Activated naive CD4-positive, alpha-beta T cell treated with anti-CD3 and anti-CD28 coated beads, Interleukin-2, amount 10 ng/mL, durations not matched to agents 7 days and 5 days (primary cell): ENCODE measurements at regions of chr6 and their contacts with region 1.

Region 1: GRCh38 chr6:5302995-5303622 is 41.8 kb downstream of the FARS2 start:
- DNase-seq: peak; percentile 72
- H3K4me3 Mint-ChIP-seq: no peak overlapping the region
- H3K27ac Mint-ChIP-seq: no peak overlapping the region
- H3K4me1 Mint-ChIP-seq: peaks cover 19% of the 10 kb centered on the region
- H3K27me3 Mint-ChIP-seq: no peaks in the 10 kb centered on the region

Region 2: DNA sequence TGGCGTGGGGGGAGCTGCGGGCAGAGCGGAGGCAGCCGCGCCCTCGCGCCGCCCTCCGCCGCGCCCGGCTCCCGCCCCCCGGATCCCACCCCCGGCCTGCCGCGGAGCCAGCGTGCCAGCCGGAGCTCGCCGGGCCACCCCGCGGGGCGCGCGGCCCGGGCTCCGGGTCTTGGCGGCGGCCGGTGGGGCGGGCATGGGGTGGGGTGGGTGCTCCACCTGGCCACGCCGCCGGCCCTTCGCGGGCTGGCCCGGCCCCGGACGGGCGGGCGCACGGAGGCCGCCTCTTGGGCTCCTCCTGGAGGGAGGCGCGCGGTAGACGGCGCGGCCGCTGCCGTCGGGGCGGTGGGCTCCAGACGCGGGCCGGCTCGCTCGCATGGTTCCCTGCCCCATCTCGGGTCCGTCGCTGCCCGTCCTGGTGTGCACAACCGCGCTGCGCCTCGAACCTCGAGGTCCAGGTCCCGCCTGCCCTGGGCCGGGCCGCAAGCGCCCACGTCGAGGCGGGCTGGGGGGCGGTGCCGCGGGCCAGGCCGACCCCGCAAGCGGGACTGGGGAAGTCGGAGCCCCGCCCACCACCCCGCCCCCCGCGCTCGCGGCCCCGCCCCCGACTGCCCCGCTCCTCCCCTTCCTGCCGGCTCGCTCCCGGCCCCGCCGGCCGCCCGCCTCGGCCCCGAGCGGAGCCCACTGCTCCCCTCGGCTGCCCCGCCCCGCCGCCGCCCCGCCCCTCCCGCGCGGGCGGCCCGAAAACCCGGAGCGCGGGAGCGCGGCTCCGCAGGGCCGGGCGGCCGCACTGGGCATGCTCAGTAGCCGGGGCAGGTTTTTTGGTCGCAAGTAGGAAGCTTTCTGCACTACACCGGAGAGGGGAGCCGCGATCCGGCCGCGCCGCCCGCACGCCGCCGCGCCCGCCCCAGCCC is 527.3 kb before region 1 on chr6 and contains the start of gene CDYL:
- CTCF ChIA-PET with region 1: no interaction called
- DNase-seq: peak; percentile 86
- H3K4me3 Mint-ChIP-seq: peak within 1 kb of the TSS; percentile 78
- H3K27ac Mint-ChIP-seq: peak within 1 kb of the TSS; percentile 79
- H3K4me1 Mint-ChIP-seq: peaks cover 40% of the 10 kb centered on the region
- H3K27me3 Mint-ChIP-seq: peaks cover 38% of the 10 kb centered on the region

Region 3: DNA sequence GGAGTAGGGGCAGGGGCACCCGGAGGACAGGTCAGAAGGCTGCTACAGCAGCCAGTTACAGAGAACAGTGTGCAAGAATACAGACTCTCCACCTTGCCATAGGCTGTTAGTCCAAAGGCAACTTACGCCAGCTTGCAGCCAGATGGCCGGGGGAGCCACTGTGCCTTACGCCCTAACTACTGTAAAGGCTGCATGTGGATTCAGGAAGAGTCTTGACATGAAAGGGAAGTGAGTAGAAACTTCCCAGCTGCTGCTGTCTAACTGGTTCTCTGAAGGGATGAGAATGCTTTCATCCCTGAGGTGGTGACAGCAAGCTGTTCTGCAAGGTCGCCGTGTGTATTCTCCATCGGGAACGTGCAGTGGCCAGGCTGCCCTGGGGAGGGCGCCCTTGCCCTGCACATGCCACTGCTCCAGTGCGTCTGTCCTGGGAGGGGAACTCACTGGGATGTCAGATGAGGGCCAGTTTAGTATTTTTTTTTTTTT is 88.5 kb before region 1 on chr6:
- CTCF ChIA-PET with region 1: interaction called, 23 read pairs
- DNase-seq: no peak
- H3K4me3 Mint-ChIP-seq: no peak overlapping the region
- H3K27ac Mint-ChIP-seq: no peak overlapping the region
- H3K4me1 Mint-ChIP-seq: peaks cover 11% of the 10 kb centered on the region
- H3K27me3 Mint-ChIP-seq: no peaks in the 10 kb centered on the region

Region 4: DNA sequence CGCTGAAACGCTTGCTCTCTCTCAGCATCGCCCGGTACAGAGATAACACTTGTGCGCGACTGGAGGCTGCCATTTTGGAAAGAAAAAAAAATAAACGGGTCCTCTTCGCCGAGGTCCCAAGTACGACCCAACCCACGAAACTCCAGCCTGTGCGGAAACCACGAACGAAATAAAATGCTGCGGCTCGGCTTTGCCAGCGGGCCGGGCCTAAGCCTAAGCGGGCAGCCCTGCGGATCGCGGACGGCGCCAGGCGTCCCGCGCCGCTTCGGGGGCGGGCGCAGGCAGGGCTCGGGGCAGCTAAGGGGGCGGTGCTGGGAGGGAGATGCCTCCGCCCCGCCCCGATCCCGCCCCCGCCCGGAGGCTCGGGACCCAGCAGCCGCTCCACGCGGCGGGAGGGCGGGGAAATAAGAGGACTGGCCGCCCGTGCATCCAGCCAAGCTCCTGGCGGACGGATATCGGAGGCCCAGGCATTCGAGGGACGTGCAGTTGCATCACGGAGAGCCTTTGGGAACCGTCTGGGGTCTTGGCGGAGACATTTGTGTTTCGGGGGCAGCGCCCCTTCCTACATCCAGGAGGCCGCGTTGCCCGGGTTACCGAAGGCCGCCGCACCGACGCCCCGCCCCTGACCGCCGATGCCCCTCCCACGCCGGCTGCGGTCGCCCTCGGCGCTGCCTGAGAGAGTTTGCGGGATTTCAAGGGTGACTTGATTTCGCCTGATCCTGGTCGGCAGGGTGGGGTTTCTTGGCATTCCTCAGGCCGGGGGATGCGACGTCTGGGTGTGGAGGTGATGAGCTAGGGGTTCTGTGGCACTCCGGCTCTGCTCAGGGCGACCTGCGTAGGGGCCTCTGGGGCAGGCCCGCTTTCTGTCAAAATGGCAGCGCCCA is 42.2 kb before region 1 on chr6 and contains the starts of genes FARS2 and LYRM4:
- CTCF ChIA-PET with region 1: interaction called, 18 read pairs
- DNase-seq: peak; percentile 91
- H3K4me3 Mint-ChIP-seq: peak within 1 kb of the TSS; percentile 98
- H3K27ac Mint-ChIP-seq: peak within 1 kb of the TSS; percentile 100
- H3K4me1 Mint-ChIP-seq: peaks cover 55% of the 10 kb centered on the region
- H3K27me3 Mint-ChIP-seq: no peaks in the 10 kb centered on the region

Region 5: GRCh38 chr6:5266423-5266822 is 36.7 kb before region 1 on chr6:
- CTCF ChIA-PET with region 1: interaction called, 18 read pairs
- DNase-seq: no peak
- H3K4me3 Mint-ChIP-seq: no peak overlapping the region
- H3K27ac Mint-ChIP-seq: no peak overlapping the region
- H3K4me1 Mint-ChIP-seq: peaks cover 43% of the 10 kb centered on the region
- H3K27me3 Mint-ChIP-seq: no peaks in the 10 kb centered on the region